ENCODE measurements at regions of chr3 and their contacts with region 1.

Region 1: GRCh38 chr3:172595641-172596393 is 72.6 kb upstream of the TNFSF10 start:
- DNase-seq: peak; percentile 69
- ATAC-seq: no peak
- H3K4me3 Mint-ChIP-seq: peak overlapping the region; percentile 83
- H3K27ac Mint-ChIP-seq: peak overlapping the region; percentile 76
- H3K4me1 Mint-ChIP-seq: peaks cover 58% of the 10 kb centered on the region
- H3K27me3 Mint-ChIP-seq: no peaks in the 10 kb centered on the region

Region 2: GRCh38 chr3:171358181-171358880 is 1237.5 kb before region 1 on chr3:
- CTCF ChIA-PET with region 1: no interaction called
- POLR2A ChIA-PET with region 1: no interaction called
- DNase-seq: no peak
- ATAC-seq: no peak
- H3K4me3 Mint-ChIP-seq: no peak overlapping the region
- H3K27ac Mint-ChIP-seq: no peak overlapping the region
- H3K4me1 Mint-ChIP-seq: peaks cover 5% of the 10 kb centered on the region
- H3K27me3 Mint-ChIP-seq: no peaks in the 10 kb centered on the region

Region 3: DNA sequence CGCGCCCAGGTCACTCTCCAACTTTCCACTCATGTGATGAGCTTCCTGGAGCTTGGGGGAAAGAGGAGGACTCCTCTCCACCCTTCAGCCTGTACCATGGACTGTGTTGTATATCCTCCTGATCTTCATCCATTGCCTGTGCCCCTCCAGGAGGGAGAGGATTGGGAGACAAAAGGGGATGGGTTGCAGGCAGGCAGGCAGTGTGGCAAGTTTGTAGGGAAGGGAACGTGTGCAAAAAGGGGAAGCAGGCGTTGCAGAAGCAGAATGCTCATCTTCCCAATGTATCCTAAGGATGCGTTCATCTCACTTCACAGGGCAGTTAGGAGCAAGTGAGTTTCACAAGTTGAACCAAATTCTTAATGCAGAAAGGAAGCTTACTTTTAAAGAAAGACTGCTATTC is 119.5 kb before region 1 on chr3:
- CTCF ChIA-PET with region 1: interaction called, 23 read pairs
- POLR2A ChIA-PET with region 1: no interaction called
- DNase-seq: no peak
- ATAC-seq: no peak
- H3K4me3 Mint-ChIP-seq: no peak overlapping the region
- H3K27ac Mint-ChIP-seq: no peak overlapping the region
- H3K4me1 Mint-ChIP-seq: peaks cover 18% of the 10 kb centered on the region
- H3K27me3 Mint-ChIP-seq: peaks cover 4% of the 10 kb centered on the region

Region 4: DNA sequence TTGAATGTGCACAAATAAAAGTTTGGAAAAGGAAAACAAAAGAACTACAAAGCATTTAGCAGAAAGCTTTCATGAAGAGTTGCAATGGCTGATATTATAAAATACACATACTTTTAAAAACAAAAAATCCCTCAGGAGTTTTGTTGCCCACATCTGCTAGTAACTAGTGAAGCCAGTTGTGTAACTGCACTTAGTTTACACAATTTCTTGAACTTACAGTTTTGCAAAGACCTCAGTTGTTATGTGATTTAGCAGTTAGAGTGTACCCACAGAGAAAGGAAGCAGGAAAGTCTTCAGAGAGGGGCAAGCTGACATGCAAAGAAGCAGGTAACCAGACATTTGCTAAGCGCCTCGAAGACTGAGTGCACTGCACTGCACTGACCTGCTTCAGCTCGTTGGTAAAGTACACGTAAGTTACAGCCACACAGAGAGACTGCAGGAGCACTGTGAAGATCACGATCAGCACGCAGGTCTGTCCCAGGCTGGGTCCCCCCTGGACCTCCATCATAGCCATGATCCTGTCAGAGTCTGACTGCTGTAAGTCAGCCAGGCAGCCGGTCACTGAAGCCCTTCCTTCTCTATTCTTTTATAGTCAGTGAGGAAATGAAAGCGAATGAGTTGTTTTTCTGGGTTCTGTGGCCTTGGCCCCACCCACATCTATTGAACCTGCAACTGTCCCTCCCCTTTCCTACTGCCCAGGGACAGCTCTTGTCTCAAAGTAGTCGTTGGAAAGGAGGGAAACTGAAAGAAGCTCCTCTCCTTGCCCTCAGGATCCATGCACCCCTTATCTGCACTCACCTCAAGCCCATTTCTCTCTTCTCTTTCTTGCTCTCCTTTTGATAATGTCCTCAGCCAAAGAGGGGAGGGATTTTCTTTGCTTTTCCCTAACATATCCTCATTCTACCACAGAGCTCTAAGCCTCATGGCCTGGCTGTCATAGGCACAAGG is 72.7 kb before region 1 on chr3 and contains the start of gene TNFSF10:
- CTCF ChIA-PET with region 1: interaction called, 214 read pairs
- POLR2A ChIA-PET with region 1: interaction called, 138 read pairs
- DNase-seq: peak; percentile 90
- ATAC-seq: peak; percentile 87
- H3K4me3 Mint-ChIP-seq: peak within 1 kb of the TSS; percentile 93
- H3K27ac Mint-ChIP-seq: peak within 1 kb of the TSS; percentile 94
- H3K4me1 Mint-ChIP-seq: peaks cover 42% of the 10 kb centered on the region
- H3K27me3 Mint-ChIP-seq: no peaks in the 10 kb centered on the region
- total RNA-seq, gene TNFSF10: 106 to 108 TPM

Region 5: GRCh38 chr3:172550347-172550943 is 45.4 kb before region 1 on chr3:
- CTCF ChIA-PET with region 1: interaction called, 24 read pairs
- POLR2A ChIA-PET with region 1: no interaction called
- DNase-seq: peak; percentile 77
- ATAC-seq: peak; percentile 98
- H3K4me3 Mint-ChIP-seq: no peak overlapping the region
- H3K27ac Mint-ChIP-seq: peak overlapping the region; percentile 66
- H3K4me1 Mint-ChIP-seq: peaks cover 53% of the 10 kb centered on the region
- H3K27me3 Mint-ChIP-seq: no peaks in the 10 kb centered on the region

Region 6: GRCh38 chr3:172614340-172615274 is 18.8 kb after region 1 on chr3:
- CTCF ChIA-PET with region 1: interaction called, 44 read pairs
- POLR2A ChIA-PET with region 1: no interaction called
- DNase-seq: no peak
- ATAC-seq: no peak
- H3K4me3 Mint-ChIP-seq: no peak overlapping the region
- H3K27ac Mint-ChIP-seq: no peak overlapping the region
- H3K4me1 Mint-ChIP-seq: peaks cover 19% of the 10 kb centered on the region
- H3K27me3 Mint-ChIP-seq: no peaks in the 10 kb centered on the region

Region 7: GRCh38 chr3:172673210-172673679 is 77.4 kb after region 1 on chr3:
- CTCF ChIA-PET with region 1: interaction called, 69 read pairs
- POLR2A ChIA-PET with region 1: no interaction called
- DNase-seq: peak; percentile 82
- ATAC-seq: peak; percentile 81
- H3K4me3 Mint-ChIP-seq: no peak overlapping the region
- H3K27ac Mint-ChIP-seq: no peak overlapping the region
- H3K4me1 Mint-ChIP-seq: peaks cover 16% of the 10 kb centered on the region
- H3K27me3 Mint-ChIP-seq: no peaks in the 10 kb centered on the region

Region 8: DNA sequence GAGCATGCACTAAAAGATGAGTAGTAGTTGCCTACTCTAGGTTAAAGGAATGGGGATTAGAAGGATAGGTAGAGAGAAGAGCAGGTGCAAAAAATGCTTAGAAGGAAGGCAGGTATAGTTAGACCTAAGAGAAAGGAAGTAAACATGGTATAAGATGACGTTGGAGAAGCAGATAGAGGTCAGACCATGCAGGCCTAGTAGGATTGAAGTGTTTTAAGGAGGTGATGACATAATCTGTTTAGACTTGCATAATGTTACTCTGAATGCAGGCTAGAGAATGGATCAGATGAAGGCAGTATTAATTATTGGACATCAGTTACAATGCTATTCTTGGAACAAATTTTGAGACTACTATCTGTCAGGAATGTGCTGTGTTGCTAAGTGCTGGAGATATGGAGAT is 143.6 kb after region 1 on chr3:
- CTCF ChIA-PET with region 1: no interaction called
- POLR2A ChIA-PET with region 1: no interaction called
- DNase-seq: no peak
- ATAC-seq: no peak
- H3K4me3 Mint-ChIP-seq: no peak overlapping the region
- H3K27ac Mint-ChIP-seq: no peak overlapping the region
- H3K4me1 Mint-ChIP-seq: no peaks in the 10 kb centered on the region
- H3K27me3 Mint-ChIP-seq: peaks cover 16% of the 10 kb centered on the region

Region 9: DNA sequence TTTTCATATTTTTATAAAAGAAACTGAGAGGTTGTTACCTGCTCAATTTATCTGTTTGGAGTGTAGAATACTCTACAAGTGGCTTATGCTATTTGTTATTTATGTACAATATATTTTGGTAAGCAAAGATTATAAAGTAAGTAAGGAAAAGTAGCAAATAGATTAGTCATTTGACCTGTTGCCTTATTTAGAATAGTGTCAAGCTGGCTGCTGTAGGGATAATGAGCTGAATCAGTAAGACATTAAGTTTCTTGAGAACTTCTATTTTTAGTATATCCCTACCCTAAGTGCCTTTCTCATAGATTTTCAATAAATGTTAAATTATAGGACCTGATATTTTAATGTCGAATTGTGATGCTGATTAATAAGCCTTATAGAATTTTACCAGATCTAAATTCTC is 191.9 kb after region 1 on chr3:
- CTCF ChIA-PET with region 1: no interaction called
- POLR2A ChIA-PET with region 1: no interaction called
- DNase-seq: no peak
- ATAC-seq: no peak
- H3K4me3 Mint-ChIP-seq: no peak overlapping the region
- H3K27ac Mint-ChIP-seq: no peak overlapping the region
- H3K4me1 Mint-ChIP-seq: no peaks in the 10 kb centered on the region
- H3K27me3 Mint-ChIP-seq: no peaks in the 10 kb centered on the region

Region 10: DNA sequence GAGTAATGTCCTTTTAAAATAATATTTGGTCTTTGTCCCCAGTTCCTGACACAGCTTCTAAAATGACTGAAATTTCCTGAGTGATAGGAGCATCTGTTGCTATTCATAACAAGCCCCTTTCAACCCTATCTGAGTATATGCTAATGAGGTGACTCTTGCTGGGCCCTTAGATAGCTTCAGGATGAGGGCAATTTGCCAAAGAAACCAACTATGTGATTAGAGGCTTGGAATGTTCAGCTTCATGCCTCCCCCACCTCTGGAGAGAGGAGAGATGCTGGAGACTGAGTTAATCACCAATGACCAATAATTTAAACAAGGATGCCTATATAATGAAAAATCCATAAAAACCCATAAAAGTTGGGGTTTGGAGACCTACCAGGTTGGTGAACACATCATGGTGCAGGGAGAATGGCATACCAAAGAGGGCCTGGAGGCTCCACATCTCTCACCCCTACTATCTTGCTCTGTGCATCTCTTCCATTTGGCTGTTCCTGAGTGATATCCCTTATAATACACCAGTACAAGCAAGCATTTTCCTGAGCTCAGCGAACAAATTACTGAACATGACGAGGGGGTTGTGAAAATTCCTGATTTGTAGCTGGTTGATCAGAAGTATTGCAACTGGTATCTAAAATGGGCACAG is 344.0 kb after region 1 on chr3:
- CTCF ChIA-PET with region 1: no interaction called
- POLR2A ChIA-PET with region 1: no interaction called
- DNase-seq: no peak
- ATAC-seq: no peak
- H3K4me3 Mint-ChIP-seq: no peak overlapping the region
- H3K27ac Mint-ChIP-seq: no peak overlapping the region
- H3K4me1 Mint-ChIP-seq: no peaks in the 10 kb centered on the region
- H3K27me3 Mint-ChIP-seq: no peaks in the 10 kb centered on the region

Measured in activated CD8-positive, alpha-beta T cell treated with anti-CD3 and anti-CD28 coated beads, Interleukin-2, amount 10 ng/mL, durations not matched to agents 7 days and 5 days (primary cell).